CD4-positive, alpha-beta memory T cell (primary cell): ENCODE measurements at regions of chr17 and their contacts with region 1.

Region 1: DNA sequence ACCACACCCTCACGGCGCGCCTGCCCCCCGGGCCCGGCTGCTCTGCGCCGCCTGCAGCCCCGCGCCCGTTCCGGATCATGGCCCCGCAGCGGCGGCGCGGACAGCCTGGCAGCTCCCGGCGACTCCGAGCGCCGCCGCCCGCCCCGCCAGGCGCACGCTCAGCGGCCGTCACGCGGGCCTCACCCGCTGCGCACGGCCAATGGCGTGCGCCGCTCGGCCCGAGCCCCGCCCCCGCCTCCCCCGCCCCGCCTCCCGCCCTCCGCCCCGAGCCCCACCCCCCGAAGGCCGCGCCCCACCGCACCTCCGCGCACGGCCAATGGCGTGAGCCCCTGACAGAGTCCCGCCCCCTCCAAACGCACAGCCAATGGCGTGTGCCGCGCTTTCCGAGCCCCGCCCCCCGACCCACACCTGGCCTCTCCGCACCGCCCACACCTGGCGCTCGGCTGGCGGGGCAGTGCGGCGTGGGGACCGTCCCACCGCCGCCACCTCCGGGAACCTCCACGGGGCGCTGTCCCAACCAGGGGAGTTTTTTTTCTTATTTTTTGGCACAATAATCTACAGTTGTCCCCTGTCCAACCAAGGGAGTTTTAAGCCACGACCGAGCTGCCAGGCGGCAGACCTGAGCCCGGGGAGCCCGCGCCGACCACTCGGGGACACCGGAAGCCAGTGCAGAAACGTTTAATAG is at the start of gene PCYT2:
- DNase-seq: peak; percentile 90 to 94 (median 93)
- H3K4me3 ChIP-seq: peak within 1 kb of the TSS; percentile 8 to 70
- H3K4me3 Mint-ChIP-seq: peak within 1 kb of the TSS; percentile 81 to 90 (median 86)
- H3K27ac ChIP-seq: peak within 1 kb of the TSS; percentile 55
- H3K27ac Mint-ChIP-seq: peak within 1 kb of the TSS in 6 of 7 donors; percentile 8 to 85 (median 82)
- H3K4me1 ChIP-seq: peaks cover 26% of the 10 kb centered on the region
- H3K4me1 Mint-ChIP-seq: peaks cover 5 to 34% (median 10%) of the 10 kb centered on the region in 4 donors
- H3K27me3 ChIP-seq: no peaks in the 10 kb centered on the region
- H3K27me3 Mint-ChIP-seq: no peaks in the 10 kb centered on the region
- total RNA-seq, gene PCYT2: 43.5 to 48.3 TPM

Region 2: DNA sequence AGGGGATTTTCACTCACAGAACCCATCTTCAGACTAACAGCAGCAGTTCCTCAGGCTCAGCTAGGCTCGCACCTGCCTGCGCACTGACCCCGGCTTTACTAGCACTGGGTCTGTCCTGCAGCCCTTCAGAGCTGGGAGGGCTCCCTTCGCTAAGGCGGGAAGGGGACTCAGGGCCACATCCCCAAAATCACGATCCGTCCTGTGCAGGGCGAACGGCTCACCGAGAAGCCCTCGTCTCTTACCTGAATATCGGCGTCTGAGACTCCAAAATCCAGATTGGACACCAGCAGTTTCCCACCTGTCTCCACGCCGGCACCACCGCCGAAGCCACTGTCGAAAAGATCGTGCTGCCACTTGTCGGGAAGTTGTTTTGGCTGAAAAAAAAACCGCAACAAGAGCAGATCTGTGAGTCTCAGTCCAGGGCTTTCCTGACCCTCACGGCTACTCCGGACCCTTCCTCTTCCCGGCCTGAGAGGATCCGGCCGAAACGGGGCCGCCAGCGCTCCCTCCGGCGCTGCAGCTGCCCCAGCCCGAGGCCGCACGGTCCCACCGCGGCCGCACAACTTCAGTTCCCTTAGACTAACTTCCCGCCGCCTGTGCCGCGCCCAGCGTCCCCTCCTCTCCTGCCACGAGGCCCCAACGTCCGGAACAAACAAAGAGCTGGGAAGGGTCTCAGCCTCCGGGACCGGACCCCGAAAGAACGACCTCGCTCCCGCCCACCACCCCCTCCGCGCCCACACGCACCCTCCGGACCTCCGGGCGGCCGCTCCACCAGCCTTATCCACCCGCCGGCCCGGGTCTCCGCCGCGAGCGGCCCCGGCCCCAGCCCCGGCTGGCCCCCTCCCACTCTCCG is 20.7 kb before region 1 on chr17:
- CTCF ChIA-PET with region 1: interaction called, 5 read pairs
- POLR2A ChIA-PET with region 1: interaction called, 7 read pairs
- intact Hi-C with region 1: loop called (anchors 1 kb)
- DNase-seq: no peak
- H3K4me3 ChIP-seq: peak overlapping the region; percentile 42 to 60
- H3K4me3 Mint-ChIP-seq: peak overlapping the region; percentile 85 to 92 (median 89)
- H3K27ac ChIP-seq: peak overlapping the region; percentile 64
- H3K27ac Mint-ChIP-seq: peak overlapping the region; percentile 89 to 97 (median 96)
- H3K4me1 ChIP-seq: peaks cover 20% of the 10 kb centered on the region
- H3K4me1 Mint-ChIP-seq: peaks cover 8 to 33% (median 17%) of the 10 kb centered on the region in 4 donors
- H3K27me3 ChIP-seq: no peaks in the 10 kb centered on the region
- H3K27me3 Mint-ChIP-seq: no peaks in the 10 kb centered on the region